B cell (primary cell): ENCODE measurements at regions of chr5 and their contacts with region 1.

Region 1: GRCh38 chr5:157858527-157859226 is at the start of gene CLINT1:
- DNase-seq: peak; percentile 90
- ATAC-seq: peak; percentile 94
- H3K4me3 ChIP-seq: peak within 1 kb of the TSS; percentile 70 to 89 (median 83)
- H3K4me3 Mint-ChIP-seq: peak within 1 kb of the TSS; percentile 89
- H3K27ac ChIP-seq: peak within 1 kb of the TSS; percentile 67 to 86
- H3K27ac Mint-ChIP-seq: peak within 1 kb of the TSS; percentile 96
- H3K4me1 ChIP-seq: peaks cover 23 to 31% of the 10 kb centered on the region in 2 donors
- H3K4me1 Mint-ChIP-seq: peaks cover 64% of the 10 kb centered on the region
- H3K27me3 ChIP-seq: no peaks in the 10 kb centered on the region
- H3K27me3 Mint-ChIP-seq: no peaks in the 10 kb centered on the region
- CTCF ChIP-seq: no peak
- total RNA-seq, gene CLINT1: 62.7 and 69.7 TPM in 2 replicates

Region 2: DNA sequence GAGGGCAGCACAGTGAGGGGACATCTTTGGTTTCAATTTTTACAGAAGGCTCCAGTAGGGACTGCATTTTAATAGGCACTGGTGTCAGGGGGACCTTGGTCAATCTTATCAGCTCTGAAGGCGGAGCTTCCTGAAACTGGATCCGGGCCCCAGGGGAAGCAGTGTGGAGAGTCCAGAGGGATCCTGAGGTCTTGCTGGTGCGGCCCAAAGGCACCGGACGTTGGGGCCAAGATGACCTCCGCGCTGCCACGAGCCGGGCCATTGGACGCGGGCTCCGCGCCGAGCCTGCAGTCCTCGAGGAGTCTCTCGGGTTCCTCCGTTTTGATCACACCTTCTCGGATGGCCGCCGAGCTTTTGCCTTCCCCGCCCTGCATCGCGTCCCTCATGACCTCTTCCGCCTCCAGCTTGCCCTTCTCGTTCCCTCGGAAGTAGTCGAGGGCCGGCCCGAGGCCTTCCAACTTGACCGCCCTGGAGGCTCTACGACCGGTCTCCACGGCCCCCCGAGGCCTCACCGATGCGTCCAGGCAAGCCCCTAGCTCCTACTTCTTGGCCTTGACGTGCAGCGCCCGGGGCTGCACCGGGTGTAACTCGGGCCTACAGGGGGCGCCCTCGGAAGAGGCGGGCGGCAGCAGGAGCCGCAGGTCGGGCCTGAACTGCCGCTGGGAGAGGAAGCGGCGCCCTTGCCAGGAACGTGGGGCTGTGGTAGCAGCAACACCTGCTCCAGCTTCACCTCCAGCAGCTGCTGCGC is 168.6 kb before region 1 on chr5:
- CTCF ChIA-PET with region 1: no interaction called
- POLR2A ChIA-PET with region 1: no interaction called
- intact Hi-C with region 1: no loop called
- DNase-seq: peak; percentile 51
- ATAC-seq: peak; percentile 58
- H3K4me3 ChIP-seq: peak overlapping the region in 1 of 5 experiments; percentile 16
- H3K4me3 Mint-ChIP-seq: peak overlapping the region; percentile 26
- H3K27ac ChIP-seq: no peak overlapping the region
- H3K27ac Mint-ChIP-seq: no peak overlapping the region
- H3K4me1 ChIP-seq: no peaks in the 10 kb centered on the region
- H3K4me1 Mint-ChIP-seq: no peaks in the 10 kb centered on the region
- H3K27me3 ChIP-seq: no peaks in the 10 kb centered on the region
- H3K27me3 Mint-ChIP-seq: no peaks in the 10 kb centered on the region
- CTCF ChIP-seq: peak; percentile 42

Region 3: DNA sequence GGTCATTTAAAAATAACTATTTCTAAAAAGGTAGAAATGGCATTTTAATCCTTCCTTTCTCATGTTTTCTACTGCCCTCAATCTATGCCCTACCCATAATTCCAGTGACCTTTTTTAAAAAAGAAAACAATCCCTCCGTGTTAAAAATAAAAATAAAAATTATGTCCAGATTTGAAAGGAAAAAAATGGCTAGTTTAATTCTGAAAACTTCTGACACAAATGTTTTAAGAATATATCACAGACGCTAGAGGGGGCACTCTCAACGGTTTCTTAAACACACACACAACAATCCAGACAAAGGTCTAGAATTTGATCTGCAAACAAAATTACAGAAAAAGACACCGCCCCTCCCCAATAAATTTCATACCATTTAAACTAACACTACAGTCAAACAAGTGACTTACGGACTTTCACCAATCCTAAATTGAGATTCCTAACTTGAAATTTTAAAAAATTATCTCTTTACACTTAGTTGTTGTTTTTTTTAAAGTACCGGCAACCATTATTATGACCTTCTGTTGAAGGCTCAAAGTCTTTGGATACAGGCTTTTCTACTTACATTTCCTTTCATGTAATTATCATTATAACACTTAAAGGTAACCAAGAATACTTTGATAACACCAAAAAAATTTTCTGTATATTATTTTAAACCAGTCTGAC is 38.0 kb before region 1 on chr5:
- CTCF ChIA-PET with region 1: interaction called, 4 read pairs
- POLR2A ChIA-PET with region 1: no interaction called
- intact Hi-C with region 1: loop called (anchors 5 kb)
- DNase-seq: peak; percentile 53
- ATAC-seq: no peak
- H3K4me3 ChIP-seq: no peak overlapping the region
- H3K4me3 Mint-ChIP-seq: no peak overlapping the region
- H3K27ac ChIP-seq: peak overlapping the region in 1 of 2 donors; percentile 39
- H3K27ac Mint-ChIP-seq: peak overlapping the region; percentile 2
- H3K4me1 ChIP-seq: no peaks in the 10 kb centered on the region
- H3K4me1 Mint-ChIP-seq: peaks cover 24% of the 10 kb centered on the region
- H3K27me3 ChIP-seq: no peaks in the 10 kb centered on the region
- H3K27me3 Mint-ChIP-seq: no peaks in the 10 kb centered on the region
- CTCF ChIP-seq: peak; percentile 72

Region 4: GRCh38 chr5:157917899-157918809 is 59.5 kb after region 1 on chr5:
- CTCF ChIA-PET with region 1: interaction called, 5 read pairs
- POLR2A ChIA-PET with region 1: interaction called, 3 read pairs
- intact Hi-C with region 1: loop called (anchors 5 kb)
- DNase-seq: peak; percentile 45
- ATAC-seq: no peak
- H3K4me3 ChIP-seq: no peak overlapping the region
- H3K4me3 Mint-ChIP-seq: peak overlapping the region; percentile 77
- H3K27ac ChIP-seq: peak overlapping the region in 1 of 2 donors; percentile 75
- H3K27ac Mint-ChIP-seq: peak overlapping the region; percentile 91
- H3K4me1 ChIP-seq: peaks cover 28 to 30% of the 10 kb centered on the region in 2 donors
- H3K4me1 Mint-ChIP-seq: peaks cover 34% of the 10 kb centered on the region
- H3K27me3 ChIP-seq: no peaks in the 10 kb centered on the region
- H3K27me3 Mint-ChIP-seq: no peaks in the 10 kb centered on the region
- CTCF ChIP-seq: peak; percentile 58

Region 5: GRCh38 chr5:158511454-158511853 is 652.8 kb after region 1 on chr5:
- CTCF ChIA-PET with region 1: no interaction called
- POLR2A ChIA-PET with region 1: interaction called, 11 read pairs
- intact Hi-C with region 1: no loop called
- DNase-seq: peak; percentile 74
- ATAC-seq: peak; percentile 98
- H3K4me3 ChIP-seq: no peak overlapping the region
- H3K4me3 Mint-ChIP-seq: peak overlapping the region; percentile 33
- H3K27ac ChIP-seq: peak overlapping the region in 1 of 2 donors; percentile 21
- H3K27ac Mint-ChIP-seq: peak overlapping the region; percentile 64
- H3K4me1 ChIP-seq: peaks cover 45 to 46% of the 10 kb centered on the region in 2 donors
- H3K4me1 Mint-ChIP-seq: peaks cover 49% of the 10 kb centered on the region
- H3K27me3 ChIP-seq: no peaks in the 10 kb centered on the region
- H3K27me3 Mint-ChIP-seq: no peaks in the 10 kb centered on the region
- CTCF ChIP-seq: no peak